PC-3 (cell line): ENCODE measurements at regions of chr20 and their contacts with region 1.

Region 1: GRCh38 chr20:58447511-58448391 is 58.7 kb downstream of the VAPB start:
- DNase-seq: peak; percentile 86
- ATAC-seq: peak; percentile 87
- H3K4me3 ChIP-seq: no peak overlapping the region
- H3K27ac ChIP-seq: no peak overlapping the region
- H3K4me1 ChIP-seq: no peaks in the 10 kb centered on the region
- H3K27me3 ChIP-seq: no peaks in the 10 kb centered on the region
- CTCF ChIP-seq: peak; percentile 96

Region 2: DNA sequence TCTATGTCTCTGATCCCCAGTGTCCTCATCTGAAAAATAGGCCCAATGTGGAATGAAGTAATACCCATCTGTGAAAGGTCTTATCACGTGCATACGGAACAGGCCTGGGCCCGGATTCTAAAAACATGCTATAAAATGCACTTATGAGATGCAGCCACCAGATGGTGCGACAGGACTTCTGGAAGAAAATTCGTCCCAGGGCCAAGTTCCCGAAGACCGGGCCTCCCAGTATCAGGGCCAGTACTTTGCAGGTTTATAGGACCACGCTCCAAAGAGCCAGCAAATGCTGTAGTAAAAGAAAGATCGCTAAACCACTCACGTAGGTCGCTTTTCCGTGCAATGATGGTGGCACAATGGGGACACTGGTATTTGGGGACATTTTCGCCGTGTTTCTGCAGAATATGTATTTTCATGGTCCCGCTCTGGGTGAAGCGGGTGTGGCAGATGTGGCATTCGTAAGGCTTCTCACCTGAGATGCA is 933.4 kb before region 1 on chr20:
- CTCF ChIA-PET with region 1: no interaction called
- POLR2A ChIA-PET with region 1: no interaction called
- intact Hi-C with region 1: loop called (anchors 5 kb)
- DNase-seq: peak; percentile 88
- ATAC-seq: peak; percentile 60
- H3K4me3 ChIP-seq: no peak overlapping the region
- H3K27ac ChIP-seq: no peak overlapping the region
- H3K4me1 ChIP-seq: no peaks in the 10 kb centered on the region
- H3K27me3 ChIP-seq: no peaks in the 10 kb centered on the region
- CTCF ChIP-seq: peak; percentile 96

Region 3: DNA sequence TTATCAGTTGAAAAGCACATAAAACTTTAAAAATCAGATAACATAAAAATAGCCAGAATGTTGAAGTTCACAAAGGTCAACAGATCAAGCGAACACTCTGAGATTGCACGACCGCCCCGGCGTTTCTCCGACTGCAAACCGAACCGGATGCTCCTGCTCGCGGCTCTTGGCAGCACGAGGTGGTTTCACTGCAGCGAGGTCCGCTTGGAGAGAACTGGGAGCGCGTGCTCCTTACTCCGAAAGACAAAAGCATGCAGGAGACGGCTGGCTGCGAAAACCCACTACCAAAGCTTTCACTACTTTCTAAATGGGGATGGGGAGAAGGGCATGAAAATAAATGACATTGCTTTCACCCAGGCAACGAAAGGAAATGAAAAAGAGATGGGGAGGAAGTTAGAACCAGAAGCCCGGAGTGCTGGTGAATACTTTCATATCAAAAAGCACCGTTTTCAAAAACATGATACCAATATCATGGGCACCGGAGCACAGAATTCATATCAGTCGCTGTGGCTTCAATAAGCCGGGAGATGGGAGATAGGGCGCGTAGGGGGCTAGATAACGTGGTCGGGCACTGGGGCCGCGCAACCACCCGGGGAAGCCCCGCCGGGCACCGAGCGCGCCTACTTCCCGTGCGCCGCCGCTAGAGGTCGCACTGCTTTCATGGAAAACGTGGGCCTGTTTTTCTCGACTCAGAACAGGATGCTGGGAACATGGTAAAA is 211.0 kb before region 1 on chr20:
- CTCF ChIA-PET with region 1: interaction called, 8 read pairs
- POLR2A ChIA-PET with region 1: no interaction called
- intact Hi-C with region 1: loop called (anchors 1 kb)
- DNase-seq: peak; percentile 90
- ATAC-seq: peak; percentile 88
- H3K4me3 ChIP-seq: peak overlapping the region; percentile 71
- H3K27ac ChIP-seq: peak overlapping the region; percentile 40
- H3K4me1 ChIP-seq: peaks cover 26% of the 10 kb centered on the region
- H3K27me3 ChIP-seq: no peaks in the 10 kb centered on the region
- CTCF ChIP-seq: peak; percentile 99

Region 4: GRCh38 chr20:58246346-58246745 is 201.4 kb before region 1 on chr20:
- CTCF ChIA-PET with region 1: interaction called, 4 read pairs
- POLR2A ChIA-PET with region 1: no interaction called
- intact Hi-C with region 1: loop called (anchors 1 kb)
- DNase-seq: peak; percentile 59
- ATAC-seq: peak; percentile 38; the same call in 1 of the 2 replicates
- H3K4me3 ChIP-seq: no peak overlapping the region
- H3K27ac ChIP-seq: no peak overlapping the region
- H3K4me1 ChIP-seq: peaks cover 13% of the 10 kb centered on the region
- H3K27me3 ChIP-seq: no peaks in the 10 kb centered on the region
- CTCF ChIP-seq: peak; percentile 77

Region 5: GRCh38 chr20:58309575-58310290 is 138.0 kb before region 1 on chr20 and contains the start of gene RAB22A:
- CTCF ChIA-PET with region 1: no interaction called
- POLR2A ChIA-PET with region 1: no interaction called
- intact Hi-C with region 1: loop called (anchors 1 kb)
- DNase-seq: peak; percentile 84
- ATAC-seq: peak; percentile 62
- H3K4me3 ChIP-seq: peak within 1 kb of the TSS; percentile 86
- H3K27ac ChIP-seq: peak within 1 kb of the TSS; percentile 68
- H3K4me1 ChIP-seq: peaks cover 44% of the 10 kb centered on the region
- H3K27me3 ChIP-seq: no peaks in the 10 kb centered on the region
- CTCF ChIP-seq: no peak
- total RNA-seq, gene RAB22A: 47.4 and 55.0 TPM in 2 replicates

Region 6: DNA sequence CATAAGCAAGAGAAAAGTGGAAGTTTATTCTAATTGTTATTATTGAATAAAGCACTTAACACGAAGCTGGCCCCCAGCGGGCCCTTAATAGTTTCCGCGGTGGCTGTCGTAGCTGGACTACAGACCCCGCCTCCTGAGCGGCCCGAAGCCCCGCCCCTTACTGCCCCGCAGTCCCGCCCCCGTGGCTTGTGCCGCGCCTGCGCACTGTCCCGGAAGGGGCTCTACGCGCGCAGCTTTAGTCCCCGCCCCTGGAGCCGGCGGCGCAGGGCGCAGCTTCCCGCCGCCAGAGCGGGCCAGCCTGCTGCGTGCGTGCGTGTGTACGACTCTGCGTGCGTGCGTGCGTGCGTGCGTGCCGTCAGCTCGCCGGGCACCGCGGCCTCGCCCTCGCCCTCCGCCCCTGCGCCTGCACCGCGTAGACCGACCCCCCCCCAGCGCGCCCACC is 58.8 kb before region 1 on chr20 and contains the start of gene VAPB:
- CTCF ChIA-PET with region 1: no interaction called
- POLR2A ChIA-PET with region 1: no interaction called
- intact Hi-C with region 1: loop called (anchors 10 kb)
- DNase-seq: peak; percentile 99
- ATAC-seq: peak; percentile 99
- H3K4me3 ChIP-seq: peak within 1 kb of the TSS; percentile 83
- H3K27ac ChIP-seq: peak within 1 kb of the TSS; percentile 69
- H3K4me1 ChIP-seq: peaks cover 34% of the 10 kb centered on the region
- H3K27me3 ChIP-seq: no peaks in the 10 kb centered on the region
- CTCF ChIP-seq: no peak
- total RNA-seq, gene VAPB: 16.5 and 23.0 TPM in 2 replicates

Region 7: DNA sequence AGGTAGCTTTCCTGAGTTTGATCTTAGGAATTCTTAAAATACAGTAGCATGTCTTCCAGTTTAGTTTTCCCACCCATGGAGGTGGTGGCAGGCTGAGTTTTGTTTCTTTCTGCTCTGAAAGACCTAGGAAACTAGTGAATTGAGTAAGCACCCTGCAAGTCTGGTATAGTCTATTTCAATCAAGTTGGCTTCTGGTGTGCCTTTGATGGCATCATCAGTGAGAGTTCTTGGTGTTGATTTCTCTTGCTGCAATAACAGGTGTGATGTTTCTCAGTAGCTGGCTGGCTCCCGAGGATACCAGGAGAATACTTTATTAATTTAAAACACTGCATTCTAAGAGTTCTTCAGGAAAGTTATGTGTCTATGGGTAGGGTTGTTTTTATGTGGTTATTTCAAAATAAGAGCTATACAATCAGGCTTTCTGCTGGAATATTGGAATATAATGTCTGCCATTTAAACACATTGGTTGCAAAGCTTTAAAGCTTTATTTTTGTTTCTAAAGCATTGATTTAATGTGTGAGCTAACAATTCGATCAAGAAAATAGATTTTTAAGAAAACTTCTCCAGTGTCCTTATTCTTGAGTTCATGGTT is 39.7 kb before region 1 on chr20:
- CTCF ChIA-PET with region 1: no interaction called
- POLR2A ChIA-PET with region 1: no interaction called
- intact Hi-C with region 1: loop called (anchors 2 kb)
- DNase-seq: no peak
- ATAC-seq: no peak
- H3K4me3 ChIP-seq: no peak overlapping the region
- H3K27ac ChIP-seq: peak overlapping the region; percentile 4
- H3K4me1 ChIP-seq: peaks cover 35% of the 10 kb centered on the region
- H3K27me3 ChIP-seq: no peaks in the 10 kb centered on the region
- CTCF ChIP-seq: no peak

Region 8: GRCh38 chr20:58524814-58525213 is 77.1 kb after region 1 on chr20:
- CTCF ChIA-PET with region 1: no interaction called
- POLR2A ChIA-PET with region 1: no interaction called
- intact Hi-C with region 1: no loop called
- DNase-seq: peak; percentile 88
- ATAC-seq: peak; percentile 74
- H3K4me3 ChIP-seq: no peak overlapping the region
- H3K27ac ChIP-seq: peak overlapping the region; percentile 61
- H3K4me1 ChIP-seq: peaks cover 14% of the 10 kb centered on the region
- H3K27me3 ChIP-seq: no peaks in the 10 kb centered on the region
- CTCF ChIP-seq: no peak